IMR-90 (cell line): ENCODE measurements at regions of chr9 and their contacts with region 1.

Region 1: DNA sequence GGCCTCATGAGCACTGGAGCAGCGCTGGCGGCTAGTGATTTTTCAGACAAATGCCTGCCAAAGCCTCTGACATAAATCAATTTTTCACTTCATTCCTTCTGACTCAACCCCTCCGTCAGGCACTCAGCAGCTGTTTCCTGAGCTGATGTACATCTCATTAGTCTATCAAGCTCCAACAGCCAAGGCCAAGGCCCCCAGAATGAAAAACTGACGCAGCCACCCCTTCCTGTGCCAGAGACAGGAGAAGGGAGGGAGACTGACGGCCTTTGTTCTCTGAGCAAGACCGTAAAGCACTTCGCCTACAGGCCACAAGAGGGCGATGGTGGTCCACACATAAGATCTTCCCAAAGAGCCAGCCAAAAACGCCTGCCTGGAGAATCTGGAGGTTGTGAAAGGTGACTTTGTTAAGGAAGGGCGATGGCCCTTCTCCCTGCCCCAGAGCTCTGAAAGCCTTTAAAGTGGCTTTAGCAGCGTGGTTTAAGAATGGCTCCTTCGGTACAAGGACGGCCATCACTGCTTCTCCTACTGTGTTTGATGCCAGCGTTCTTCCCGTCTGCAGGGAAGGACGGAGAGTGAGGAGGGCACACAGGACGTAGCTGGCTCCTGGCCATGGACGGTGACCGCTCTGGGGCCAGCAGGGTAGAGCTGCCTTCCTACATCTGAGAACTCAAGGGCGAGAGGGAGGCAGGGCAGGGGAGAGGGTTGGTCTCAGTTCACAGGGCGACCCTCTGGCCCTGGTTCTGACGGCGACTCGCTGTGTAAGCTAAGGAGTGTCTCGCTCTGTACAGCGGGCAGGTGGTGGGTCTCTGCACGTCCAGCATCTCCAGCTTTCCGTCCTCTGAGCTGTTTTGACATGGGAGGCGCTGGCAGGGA is 37.0 kb downstream of the ALG2 start:
- DNase-seq: peak; percentile 93
- ATAC-seq: peak; percentile 94
- H3K4me3 ChIP-seq: no peak overlapping the region
- H3K27ac ChIP-seq: no peak overlapping the region
- H3K4me1 ChIP-seq: peaks cover 5% of the 10 kb centered on the region
- H3K27me3 ChIP-seq: peaks cover 6% of the 10 kb centered on the region
- CTCF ChIP-seq: peak; percentile 92
- POLR2A ChIP-seq: no peak
- RAD21 ChIP-seq: peak; percentile 91

Region 2: GRCh38 chr9:99162759-99163364 is 21.8 kb before region 1 on chr9:
- CTCF ChIA-PET with region 1: no interaction called
- POLR2A ChIA-PET with region 1: no interaction called
- dilution Hi-C with region 1: no loop called
- in situ Hi-C with region 1: no loop called
- intact Hi-C with region 1: no loop called
- DNase-seq: peak; percentile 51
- ATAC-seq: peak; percentile 67
- H3K4me3 ChIP-seq: no peak overlapping the region
- H3K27ac ChIP-seq: no peak overlapping the region
- H3K4me1 ChIP-seq: no peaks in the 10 kb centered on the region; the same call in 1 of the 2 replicates
- H3K27me3 ChIP-seq: peaks cover 7% of the 10 kb centered on the region
- CTCF ChIP-seq: peak; percentile 72
- POLR2A ChIP-seq: no peak
- RAD21 ChIP-seq: peak; percentile 78

Region 3: GRCh38 chr9:99221621-99222415 is 37.1 kb after region 1 on chr9 and contains the starts of genes ALG2 and SEC61B:
- CTCF ChIA-PET with region 1: interaction called, 12 read pairs
- POLR2A ChIA-PET with region 1: no interaction called
- dilution Hi-C with region 1: no loop called
- in situ Hi-C with region 1: no loop called
- intact Hi-C with region 1: loop called (anchors 2 kb)
- DNase-seq: peak; percentile 96
- ATAC-seq: peak; percentile 95
- H3K4me3 ChIP-seq: peak within 1 kb of the TSS; percentile 92
- H3K27ac ChIP-seq: peak within 1 kb of the TSS; percentile 98
- H3K4me1 ChIP-seq: no peaks in the 10 kb centered on the region; the same call in none of the 2 replicates
- H3K27me3 ChIP-seq: no peaks in the 10 kb centered on the region
- CTCF ChIP-seq: no peak
- POLR2A ChIP-seq: peak; percentile 96
- RAD21 ChIP-seq: no peak
- total RNA-seq, gene ALG2: 33.9 and 38.4 TPM in 2 replicates
- total RNA-seq, gene SEC61B: 180 and 184 TPM in 2 replicates

Region 4: DNA sequence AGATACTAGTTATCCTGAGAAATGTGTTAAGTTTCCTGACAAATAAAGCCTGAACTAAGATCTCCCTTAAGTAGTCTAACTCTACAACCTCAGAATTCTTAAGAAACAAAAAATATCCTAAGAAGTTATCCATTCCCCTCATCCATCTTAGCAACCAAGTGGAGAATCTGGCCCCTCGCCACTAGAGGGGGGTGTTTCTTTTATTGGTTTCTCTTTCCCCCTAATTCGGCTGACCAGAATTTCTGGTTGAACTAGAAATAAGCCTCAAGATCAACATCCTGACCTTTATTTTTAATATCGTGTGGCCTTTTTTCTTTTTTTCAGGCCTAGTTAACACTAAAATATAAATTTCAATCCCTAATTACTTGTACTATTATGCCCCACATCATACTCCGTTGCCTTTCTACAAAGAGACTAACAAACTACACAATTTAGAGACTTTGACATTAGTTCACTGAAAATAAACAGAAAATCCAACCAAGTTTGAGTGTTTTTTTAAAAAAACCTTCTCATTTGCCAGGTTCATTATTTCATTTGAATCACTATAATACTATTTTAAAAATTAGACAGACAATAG is 622.7 kb after region 1 on chr9:
- CTCF ChIA-PET with region 1: no interaction called
- POLR2A ChIA-PET with region 1: no interaction called
- dilution Hi-C with region 1: no loop called
- in situ Hi-C with region 1: loop called (anchors 10 kb)
- intact Hi-C with region 1: no loop called
- DNase-seq: peak; percentile 59
- ATAC-seq: peak; percentile 82
- H3K4me3 ChIP-seq: no peak overlapping the region
- H3K27ac ChIP-seq: no peak overlapping the region
- H3K4me1 ChIP-seq: no peaks in the 10 kb centered on the region
- H3K27me3 ChIP-seq: no peaks in the 10 kb centered on the region
- CTCF ChIP-seq: peak; percentile 82
- POLR2A ChIP-seq: no peak
- RAD21 ChIP-seq: peak; percentile 65

Region 5: GRCh38 chr9:100111235-100111634 is 926.5 kb after region 1 on chr9:
- CTCF ChIA-PET with region 1: no interaction called
- POLR2A ChIA-PET with region 1: no interaction called
- dilution Hi-C with region 1: no loop called
- in situ Hi-C with region 1: no loop called
- intact Hi-C with region 1: loop called (anchors 1 kb)
- DNase-seq: peak; percentile 98
- ATAC-seq: peak; percentile 96
- H3K4me3 ChIP-seq: no peak overlapping the region
- H3K27ac ChIP-seq: no peak overlapping the region
- H3K4me1 ChIP-seq: no peaks in the 10 kb centered on the region
- H3K27me3 ChIP-seq: no peaks in the 10 kb centered on the region
- CTCF ChIP-seq: no peak
- POLR2A ChIP-seq: no peak
- RAD21 ChIP-seq: no peak

Region 6: DNA sequence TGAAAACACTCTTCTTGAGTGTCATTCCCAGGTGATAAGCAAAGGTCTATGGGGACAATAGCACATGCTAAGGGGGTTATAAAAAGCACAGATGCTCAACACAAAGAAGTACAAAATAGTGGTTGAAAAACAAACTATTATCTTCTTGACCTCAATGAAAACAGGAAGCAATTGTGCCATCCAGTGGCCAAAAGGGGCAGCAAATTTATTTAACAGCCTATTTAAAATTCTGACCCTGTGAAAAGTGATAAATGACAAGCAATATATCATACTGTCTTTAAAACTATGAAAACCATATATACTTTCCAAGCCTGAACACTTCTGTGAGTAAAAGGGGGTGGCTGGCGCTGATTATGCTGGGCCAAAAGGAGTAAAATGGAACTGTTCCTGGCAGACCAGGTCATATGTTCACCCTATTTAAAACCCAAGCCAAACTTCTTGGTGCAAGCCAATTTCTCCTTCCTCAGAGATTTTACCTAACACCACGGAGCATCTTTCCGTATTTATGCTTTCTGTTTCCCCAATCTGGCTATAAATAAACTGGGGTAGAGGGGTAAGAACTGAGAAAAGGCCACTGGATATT is 1138.3 kb after region 1 on chr9:
- CTCF ChIA-PET with region 1: interaction called, 3 read pairs
- POLR2A ChIA-PET with region 1: no interaction called
- dilution Hi-C with region 1: no loop called
- in situ Hi-C with region 1: loop called (anchors 10 kb)
- intact Hi-C with region 1: loop called (anchors 1 kb)
- DNase-seq: peak; percentile 51
- ATAC-seq: peak; percentile 66; the same call in 1 of the 2 replicates
- H3K4me3 ChIP-seq: no peak overlapping the region
- H3K27ac ChIP-seq: no peak overlapping the region
- H3K4me1 ChIP-seq: no peaks in the 10 kb centered on the region
- H3K27me3 ChIP-seq: no peaks in the 10 kb centered on the region
- CTCF ChIP-seq: peak; percentile 76
- POLR2A ChIP-seq: no peak
- RAD21 ChIP-seq: peak; percentile 66